ENCODE measurements at regions of chr7 and their contacts with region 1.

Region 1: GRCh38 chr7:93231799-93232672 is at the start of gene VPS50:
- DNase-seq: peak; percentile 74
- ATAC-seq: peak; percentile 97
- H3K4me3 Mint-ChIP-seq: peak within 1 kb of the TSS; percentile 100
- H3K27ac Mint-ChIP-seq: peak within 1 kb of the TSS; percentile 98
- H3K4me1 Mint-ChIP-seq: peaks cover 22% of the 10 kb centered on the region
- H3K27me3 Mint-ChIP-seq: no peaks in the 10 kb centered on the region
- CTCF ChIP-seq: no peak
- total RNA-seq, gene VPS50: 29.2 and 43.7 TPM in 2 replicates

Region 2: GRCh38 chr7:91940572-91941341 is 1291.3 kb before region 1 on chr7 and contains the start of gene AKAP9:
- CTCF ChIA-PET with region 1: no interaction called
- POLR2A ChIA-PET with region 1: no interaction called
- intact Hi-C with region 1: loop called (anchors 1 kb)
- DNase-seq: peak; percentile 85
- ATAC-seq: peak; percentile 91
- H3K4me3 Mint-ChIP-seq: peak within 1 kb of the TSS; percentile 94
- H3K27ac Mint-ChIP-seq: peak within 1 kb of the TSS; percentile 93
- H3K4me1 Mint-ChIP-seq: peaks cover 42% of the 10 kb centered on the region
- H3K27me3 Mint-ChIP-seq: no peaks in the 10 kb centered on the region
- CTCF ChIP-seq: no peak
- total RNA-seq, gene AKAP9: 54.4 and 58.4 TPM in 2 replicates

Region 3: DNA sequence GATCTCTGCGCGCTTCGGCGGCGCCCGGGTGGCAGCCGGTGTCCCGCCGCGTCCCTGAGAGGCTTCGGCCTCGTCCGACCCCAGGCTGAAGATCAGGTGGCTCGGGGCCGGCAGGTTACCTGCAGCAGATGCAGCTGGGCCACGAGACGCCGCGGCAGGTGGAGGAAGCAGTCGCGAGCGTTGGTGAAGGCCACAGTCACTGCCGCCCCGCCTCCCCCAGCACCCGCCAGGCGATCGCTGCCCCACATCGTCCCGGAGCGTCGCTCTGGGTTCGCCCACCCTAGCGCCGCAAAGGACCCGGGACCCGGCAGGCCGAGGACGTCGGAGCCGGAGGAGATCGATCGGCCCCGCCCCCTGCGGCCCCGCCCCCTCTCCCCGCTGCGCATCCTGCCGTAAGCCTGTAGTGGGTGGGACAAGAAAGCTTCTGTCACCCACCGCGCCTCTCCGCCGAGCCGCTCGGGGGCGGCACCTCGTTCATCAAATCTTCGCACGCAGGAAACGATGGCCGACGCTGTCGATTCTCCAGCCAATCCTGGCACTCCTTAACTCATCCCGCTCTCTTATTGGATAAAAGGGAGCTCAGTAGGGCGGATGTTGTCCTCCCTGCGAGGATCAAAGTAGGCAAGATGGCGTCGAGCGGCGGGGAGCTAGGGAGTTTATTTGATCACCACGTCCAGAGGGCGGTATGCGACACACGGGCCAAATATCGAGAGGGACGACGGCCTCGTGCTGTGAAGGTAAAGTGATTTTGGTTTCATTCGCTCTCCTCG is 703.7 kb before region 1 on chr7 and contains the starts of genes PEX1 and RBM48:
- CTCF ChIA-PET with region 1: no interaction called
- POLR2A ChIA-PET with region 1: interaction called, 6 read pairs
- intact Hi-C with region 1: loop called (anchors 1 kb)
- DNase-seq: peak; percentile 80
- ATAC-seq: peak; percentile 92
- H3K4me3 Mint-ChIP-seq: peak within 1 kb of the TSS; percentile 89
- H3K27ac Mint-ChIP-seq: peak within 1 kb of the TSS; percentile 93
- H3K4me1 Mint-ChIP-seq: peaks cover 24% of the 10 kb centered on the region
- H3K27me3 Mint-ChIP-seq: no peaks in the 10 kb centered on the region
- CTCF ChIP-seq: no peak
- total RNA-seq, gene PEX1: 18.2 and 21.8 TPM in 2 replicates
- total RNA-seq, gene RBM48: 21.6 and 24.3 TPM in 2 replicates

Region 4: GRCh38 chr7:92833024-92833765 is 398.8 kb before region 1 on chr7:
- CTCF ChIA-PET with region 1: no interaction called
- POLR2A ChIA-PET with region 1: interaction called, 3 read pairs
- intact Hi-C with region 1: loop called (anchors 1 kb)
- DNase-seq: peak; percentile 81
- ATAC-seq: peak; percentile 65
- H3K4me3 Mint-ChIP-seq: peak overlapping the region; percentile 87
- H3K27ac Mint-ChIP-seq: peak overlapping the region; percentile 79
- H3K4me1 Mint-ChIP-seq: peaks cover 42% of the 10 kb centered on the region
- H3K27me3 Mint-ChIP-seq: no peaks in the 10 kb centered on the region
- CTCF ChIP-seq: no peak

Region 5: GRCh38 chr7:93147363-93147762 is 84.7 kb before region 1 on chr7:
- CTCF ChIA-PET with region 1: interaction called, 3 read pairs
- POLR2A ChIA-PET with region 1: interaction called, 5 read pairs
- intact Hi-C with region 1: loop called (anchors 1 kb)
- DNase-seq: no peak
- ATAC-seq: peak; percentile 73
- H3K4me3 Mint-ChIP-seq: peak overlapping the region; percentile 90
- H3K27ac Mint-ChIP-seq: peak overlapping the region; percentile 83
- H3K4me1 Mint-ChIP-seq: peaks cover 58% of the 10 kb centered on the region
- H3K27me3 Mint-ChIP-seq: no peaks in the 10 kb centered on the region
- CTCF ChIP-seq: no peak

Region 6: GRCh38 chr7:94509879-94510581 is 1278.0 kb after region 1 on chr7:
- CTCF ChIA-PET with region 1: no interaction called
- POLR2A ChIA-PET with region 1: no interaction called
- intact Hi-C with region 1: loop called (anchors 1 kb)
- DNase-seq: peak; percentile 73
- ATAC-seq: peak; percentile 80
- H3K4me3 Mint-ChIP-seq: peak overlapping the region; percentile 87
- H3K27ac Mint-ChIP-seq: peak overlapping the region; percentile 88
- H3K4me1 Mint-ChIP-seq: peaks cover 46% of the 10 kb centered on the region
- H3K27me3 Mint-ChIP-seq: no peaks in the 10 kb centered on the region
- CTCF ChIP-seq: no peak

Measured in activated B cell treated with CpG ODN at 0.5 μM for 24 hours (primary cell).